MCF 10A (cell line): ENCODE measurements at regions of chr7 and their contacts with region 1.

Region 1: GRCh38 chr7:18590744-18591340 is 95.3 kb downstream of the HDAC9 start:
- DNase-seq: peak; percentile 57
- H3K4me3 Mint-ChIP-seq: no peak overlapping the region
- H3K27ac Mint-ChIP-seq: no peak overlapping the region
- H3K4me1 Mint-ChIP-seq: no peaks in the 10 kb centered on the region
- H3K27me3 Mint-ChIP-seq: no peaks in the 10 kb centered on the region
- CTCF ChIP-seq: peak; percentile 54

Region 2: GRCh38 chr7:18189500-18190126 is 401.2 kb before region 1 on chr7:
- CTCF ChIA-PET with region 1: no interaction called
- POLR2A ChIA-PET with region 1: no interaction called
- intact Hi-C with region 1: no loop called
- DNase-seq: no peak
- H3K4me3 Mint-ChIP-seq: no peak overlapping the region
- H3K27ac Mint-ChIP-seq: no peak overlapping the region
- H3K4me1 Mint-ChIP-seq: no peaks in the 10 kb centered on the region
- H3K27me3 Mint-ChIP-seq: no peaks in the 10 kb centered on the region
- CTCF ChIP-seq: no peak

Region 3: GRCh38 chr7:18570890-18571478 is 19.9 kb before region 1 on chr7:
- CTCF ChIA-PET with region 1: interaction called, 14 read pairs
- POLR2A ChIA-PET with region 1: no interaction called
- intact Hi-C with region 1: no loop called
- DNase-seq: peak; percentile 63
- H3K4me3 Mint-ChIP-seq: no peak overlapping the region
- H3K27ac Mint-ChIP-seq: no peak overlapping the region
- H3K4me1 Mint-ChIP-seq: no peaks in the 10 kb centered on the region
- H3K27me3 Mint-ChIP-seq: no peaks in the 10 kb centered on the region
- CTCF ChIP-seq: peak; percentile 56

Region 4: DNA sequence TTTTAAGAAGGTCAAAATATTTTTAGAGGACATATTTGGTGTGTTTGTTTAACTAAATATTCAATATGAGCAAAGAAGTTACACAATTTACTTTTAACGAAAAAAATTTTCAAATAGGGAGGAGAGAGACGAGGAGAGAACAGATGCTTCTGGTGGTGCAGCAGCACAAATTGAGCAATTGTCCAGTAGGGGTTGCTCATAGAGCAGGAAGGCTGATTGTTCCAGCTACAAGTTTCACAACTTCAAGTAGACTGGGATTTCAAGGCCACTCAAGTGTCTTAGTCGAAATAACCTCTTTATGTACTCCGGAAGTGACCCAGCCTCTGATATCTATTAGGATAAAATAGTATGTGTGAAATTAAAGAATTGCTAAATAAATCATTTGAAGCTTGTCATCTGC is 102.6 kb after region 1 on chr7:
- CTCF ChIA-PET with region 1: interaction called, 11 read pairs
- POLR2A ChIA-PET with region 1: no interaction called
- intact Hi-C with region 1: no loop called
- DNase-seq: peak; percentile 80
- H3K4me3 Mint-ChIP-seq: no peak overlapping the region
- H3K27ac Mint-ChIP-seq: no peak overlapping the region
- H3K4me1 Mint-ChIP-seq: peaks cover 8% of the 10 kb centered on the region
- H3K27me3 Mint-ChIP-seq: no peaks in the 10 kb centered on the region
- CTCF ChIP-seq: peak; percentile 69

Region 5: GRCh38 chr7:19491821-19492452 is 901.1 kb after region 1 on chr7:
- CTCF ChIA-PET with region 1: interaction called, 16 read pairs
- POLR2A ChIA-PET with region 1: no interaction called
- intact Hi-C with region 1: no loop called
- DNase-seq: peak; percentile 28
- H3K4me3 Mint-ChIP-seq: no peak overlapping the region
- H3K27ac Mint-ChIP-seq: no peak overlapping the region
- H3K4me1 Mint-ChIP-seq: no peaks in the 10 kb centered on the region
- H3K27me3 Mint-ChIP-seq: no peaks in the 10 kb centered on the region
- CTCF ChIP-seq: peak; percentile 22

Region 6: GRCh38 chr7:19665399-19666008 is 1074.7 kb after region 1 on chr7:
- CTCF ChIA-PET with region 1: interaction called, 5 read pairs
- POLR2A ChIA-PET with region 1: no interaction called
- intact Hi-C with region 1: loop called (anchors 1 kb)
- DNase-seq: peak; percentile 51
- H3K4me3 Mint-ChIP-seq: no peak overlapping the region
- H3K27ac Mint-ChIP-seq: no peak overlapping the region
- H3K4me1 Mint-ChIP-seq: peaks cover 23% of the 10 kb centered on the region
- H3K27me3 Mint-ChIP-seq: no peaks in the 10 kb centered on the region
- CTCF ChIP-seq: peak; percentile 48